PC-9 (cell line): ENCODE measurements at regions of chr11 and their contacts with region 1.

Region 1: DNA sequence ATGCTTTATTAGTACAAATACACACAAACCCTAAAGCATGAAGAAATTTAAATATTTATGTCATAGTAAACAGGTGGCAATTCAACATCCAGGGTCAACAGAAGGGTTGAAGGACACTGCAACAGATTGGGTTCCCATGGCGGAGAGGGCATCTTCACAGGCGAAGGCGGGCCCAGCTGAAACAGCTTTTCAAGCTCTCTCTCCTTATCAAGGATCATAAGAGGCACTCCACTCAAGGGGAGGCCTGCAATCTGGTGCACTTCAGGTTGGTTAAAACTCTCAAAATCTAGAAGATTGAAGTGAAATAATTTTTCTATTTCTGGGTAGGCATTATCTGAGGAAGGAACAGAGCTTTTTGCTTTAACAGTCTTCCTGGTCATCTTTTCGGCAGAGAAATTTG is 16.8 kb upstream of the SLC22A8 start:
- DNase-seq: no peak
- H3K4me3 ChIP-seq: no peak overlapping the region
- H3K27ac ChIP-seq: no peak overlapping the region
- H3K4me1 ChIP-seq: no peaks in the 10 kb centered on the region
- H3K27me3 ChIP-seq: peaks cover 72% of the 10 kb centered on the region
- CTCF ChIP-seq: no peak

Region 2: GRCh38 chr11:63212742-63213141 is 180.3 kb after region 1 on chr11:
- CTCF ChIA-PET with region 1: no interaction called
- POLR2A ChIA-PET with region 1: no interaction called
- intact Hi-C with region 1: loop called (anchors 5 kb)
- DNase-seq: peak in 1 of 2 experiments; percentile 12
- H3K4me3 ChIP-seq: no peak overlapping the region
- H3K27ac ChIP-seq: no peak overlapping the region
- H3K4me1 ChIP-seq: no peaks in the 10 kb centered on the region
- H3K27me3 ChIP-seq: peaks cover 23% of the 10 kb centered on the region; the same call in 1 of the 2 replicates
- CTCF ChIP-seq: peak; percentile 81

Region 3: GRCh38 chr11:63641727-63642126 is 609.3 kb after region 1 on chr11:
- CTCF ChIA-PET with region 1: no interaction called
- POLR2A ChIA-PET with region 1: no interaction called
- intact Hi-C with region 1: loop called (anchors 10 kb)
- DNase-seq: no peak
- H3K4me3 ChIP-seq: no peak overlapping the region
- H3K27ac ChIP-seq: no peak overlapping the region
- H3K4me1 ChIP-seq: no peaks in the 10 kb centered on the region
- H3K27me3 ChIP-seq: no peaks in the 10 kb centered on the region
- CTCF ChIP-seq: peak; percentile 31; the same call in 1 of the 2 replicates

Region 4: DNA sequence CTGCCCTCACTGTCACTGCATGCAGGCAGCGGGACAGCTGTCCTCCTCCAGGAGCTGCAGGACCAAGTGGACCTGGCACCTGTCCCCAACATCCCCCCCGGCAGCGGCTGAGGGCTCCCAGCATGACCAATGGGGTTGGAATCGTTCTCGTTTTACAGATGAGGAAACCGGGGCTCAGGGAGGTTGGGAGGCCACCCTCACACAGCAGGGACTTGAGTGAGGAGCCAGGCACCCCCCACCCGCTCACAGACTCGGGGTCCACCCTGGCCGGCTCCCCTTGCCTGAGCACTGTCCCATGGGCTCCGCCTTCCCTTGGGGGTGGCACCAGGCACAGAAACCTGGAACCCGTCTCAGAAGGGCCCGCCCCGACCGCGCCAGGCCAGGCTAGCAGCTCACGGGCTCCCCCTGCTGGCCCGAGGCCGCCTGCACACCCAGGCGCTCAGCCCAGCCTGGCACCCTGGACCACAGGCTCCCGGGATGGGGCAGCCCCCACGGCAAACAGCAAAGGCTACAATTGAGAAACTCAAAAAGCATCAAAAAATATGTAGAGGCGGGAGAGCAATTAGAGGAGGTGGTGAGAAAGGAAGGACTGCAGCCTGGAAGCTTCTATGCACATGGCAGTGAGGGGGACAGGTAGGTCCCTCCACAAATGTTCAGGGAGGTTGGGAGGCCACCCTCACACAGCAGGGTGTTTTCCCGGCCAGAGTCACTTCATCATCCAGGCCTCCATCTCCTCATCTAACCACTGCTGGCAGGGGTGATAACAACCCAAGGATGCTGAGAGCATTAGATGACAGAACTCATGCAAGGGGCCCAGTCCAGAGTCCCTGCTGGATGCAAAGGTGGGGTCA is 1120.6 kb after region 1 on chr11:
- CTCF ChIA-PET with region 1: no interaction called
- POLR2A ChIA-PET with region 1: no interaction called
- intact Hi-C with region 1: loop called (anchors 10 kb)
- DNase-seq: peak in 1 of 2 experiments; percentile 78
- H3K4me3 ChIP-seq: no peak overlapping the region
- H3K27ac ChIP-seq: no peak overlapping the region
- H3K4me1 ChIP-seq: no peaks in the 10 kb centered on the region
- H3K27me3 ChIP-seq: no peaks in the 10 kb centered on the region
- CTCF ChIP-seq: peak; percentile 100